Activated B cell treated with CpG ODN at 0.5 μM for 24 hours (primary cell): ENCODE measurements at regions of chr1 and their contacts with region 1.

Region 1: DNA sequence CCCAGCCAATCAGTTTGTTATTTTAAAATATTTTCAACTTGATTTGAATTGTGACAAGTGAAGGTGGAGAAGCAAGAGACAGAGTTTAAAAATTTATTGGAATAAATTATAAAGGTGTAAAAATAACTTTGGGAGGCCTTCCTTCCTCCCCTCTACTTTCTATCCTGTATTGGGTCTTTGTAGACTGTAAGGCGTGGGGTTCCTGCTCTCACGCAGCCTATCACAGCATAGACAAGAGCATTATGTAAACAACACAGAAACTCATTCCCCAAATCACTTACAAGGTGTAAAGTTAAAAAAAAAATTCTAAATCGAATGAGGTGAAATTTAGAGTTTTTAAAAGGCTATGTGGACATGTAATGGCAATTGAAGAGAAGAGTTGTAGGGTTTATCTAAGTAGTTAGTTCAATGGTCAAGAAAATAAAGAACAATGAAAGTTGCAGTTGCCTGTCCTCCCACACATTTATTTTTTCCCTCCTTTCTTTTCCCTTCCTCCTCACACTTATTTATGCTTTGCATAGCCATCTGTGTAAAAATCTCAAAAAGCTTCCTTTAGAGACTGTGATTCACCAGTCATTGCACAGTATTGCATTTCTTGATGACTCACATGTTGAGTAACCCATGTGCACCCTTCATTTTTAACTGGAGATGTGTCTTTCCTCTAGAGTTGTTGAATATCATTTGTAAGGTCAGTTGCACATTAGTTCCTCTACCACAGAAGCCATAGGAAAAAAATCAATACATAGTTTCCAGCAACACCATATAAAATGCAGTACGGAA is 242.2 kb downstream of the PTPRC start:
- DNase-seq: no peak
- ATAC-seq: no peak
- H3K4me3 Mint-ChIP-seq: no peak overlapping the region
- H3K27ac Mint-ChIP-seq: no peak overlapping the region
- H3K4me1 Mint-ChIP-seq: peaks cover 8% of the 10 kb centered on the region
- H3K27me3 Mint-ChIP-seq: no peaks in the 10 kb centered on the region
- CTCF ChIP-seq: no peak

Region 2: DNA sequence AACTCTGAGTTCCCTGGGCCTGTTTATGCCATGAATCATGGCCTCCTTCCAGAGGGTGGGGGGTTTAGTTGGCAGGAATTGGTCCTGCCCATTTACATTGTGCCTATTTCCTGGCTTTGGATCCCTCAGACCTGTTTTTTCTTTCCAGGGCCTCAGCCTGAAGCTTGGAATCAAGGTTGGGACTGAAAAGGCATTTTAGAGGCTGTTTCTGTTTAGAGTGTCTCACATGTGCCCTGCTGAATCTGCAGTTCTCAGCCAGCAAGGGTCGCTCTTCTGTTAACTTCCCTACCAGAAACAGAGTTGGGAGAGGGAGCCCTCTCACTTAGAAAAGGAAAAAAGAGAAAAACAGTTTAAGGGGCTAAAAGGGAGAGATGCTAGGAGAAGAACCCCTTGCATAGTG is 51.1 kb before region 1 on chr1:
- CTCF ChIA-PET with region 1: no interaction called
- POLR2A ChIA-PET with region 1: no interaction called
- intact Hi-C with region 1: loop called (anchors 2 kb)
- DNase-seq: no peak
- ATAC-seq: no peak
- H3K4me3 Mint-ChIP-seq: no peak overlapping the region
- H3K27ac Mint-ChIP-seq: no peak overlapping the region
- H3K4me1 Mint-ChIP-seq: no peaks in the 10 kb centered on the region
- H3K27me3 Mint-ChIP-seq: no peaks in the 10 kb centered on the region
- CTCF ChIP-seq: no peak

Region 3: GRCh38 chr1:198892065-198892464 is 11.1 kb after region 1 on chr1:
- CTCF ChIA-PET with region 1: no interaction called
- POLR2A ChIA-PET with region 1: no interaction called
- intact Hi-C with region 1: no loop called
- DNase-seq: no peak
- ATAC-seq: no peak
- H3K4me3 Mint-ChIP-seq: no peak overlapping the region
- H3K27ac Mint-ChIP-seq: no peak overlapping the region
- H3K4me1 Mint-ChIP-seq: peaks cover 2% of the 10 kb centered on the region
- H3K27me3 Mint-ChIP-seq: no peaks in the 10 kb centered on the region
- CTCF ChIP-seq: no peak

Region 4: GRCh38 chr1:199243423-199244061 is 362.5 kb after region 1 on chr1:
- CTCF ChIA-PET with region 1: no interaction called
- POLR2A ChIA-PET with region 1: no interaction called
- intact Hi-C with region 1: loop called (anchors 10 kb)
- DNase-seq: peak; percentile 54
- ATAC-seq: peak; percentile 97
- H3K4me3 Mint-ChIP-seq: no peak overlapping the region
- H3K27ac Mint-ChIP-seq: no peak overlapping the region
- H3K4me1 Mint-ChIP-seq: peaks cover 17% of the 10 kb centered on the region
- H3K27me3 Mint-ChIP-seq: no peaks in the 10 kb centered on the region
- CTCF ChIP-seq: no peak